Caco-2 (cell line): ENCODE measurements at regions of chr12 and their contacts with region 1.

Region 1: GRCh38 chr12:2057041-2057794 is 4.4 kb downstream of the CACNA1C start:
- DNase-seq: peak; percentile 78 to 84
- H3K4me3 ChIP-seq: no peak overlapping the region
- H3K4me3 Mint-ChIP-seq: no peak overlapping the region
- H3K27ac Mint-ChIP-seq: no peak overlapping the region
- H3K4me1 ChIP-seq: peaks cover 4% of the 10 kb centered on the region; the same call in 1 of the 2 replicates
- H3K4me1 Mint-ChIP-seq: no peaks in the 10 kb centered on the region
- H3K27me3 ChIP-seq: peaks cover 19% of the 10 kb centered on the region
- H3K27me3 Mint-ChIP-seq: peaks cover 49% of the 10 kb centered on the region
- CTCF ChIP-seq: peak; percentile 83 to 87

Region 2: DNA sequence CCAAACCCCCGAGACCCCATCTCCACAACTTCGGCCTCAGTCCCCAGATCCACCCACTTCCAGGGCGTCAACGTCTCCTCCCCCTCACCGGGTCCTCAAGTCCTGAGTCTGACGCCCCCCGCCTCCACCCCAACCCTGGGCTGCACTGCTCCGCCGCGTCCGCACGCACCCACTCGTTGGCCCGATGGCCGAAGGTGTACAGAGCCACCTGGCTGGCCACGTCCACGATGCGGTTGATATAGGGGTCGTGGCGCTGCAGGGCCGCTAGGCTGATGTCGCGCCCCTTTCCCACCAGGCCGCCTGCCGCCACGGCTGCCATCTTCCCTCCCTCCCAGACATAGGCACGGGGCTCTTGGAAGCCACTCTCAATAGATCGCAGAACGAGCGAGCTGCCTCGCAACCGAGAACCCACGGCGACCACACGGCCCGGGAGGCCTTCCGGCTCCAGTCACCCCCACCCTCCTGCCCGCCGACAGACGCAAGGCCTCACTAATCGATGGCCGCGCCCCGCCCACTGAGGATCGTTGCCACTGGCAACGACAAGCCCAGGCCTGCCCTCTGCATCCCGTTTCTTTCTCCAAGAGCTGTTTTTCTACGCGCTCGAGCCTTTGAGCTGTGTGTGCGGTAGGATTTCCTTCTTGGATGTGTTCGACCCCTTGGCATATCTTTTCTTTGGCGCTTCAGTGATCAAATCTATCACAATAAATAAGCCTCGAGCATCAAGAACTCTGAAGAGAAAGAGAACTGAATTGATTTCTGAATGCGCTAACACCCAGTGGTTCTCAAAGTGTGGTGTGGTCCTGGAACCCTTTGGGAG is 52.9 kb before region 1 on chr12 and contains the start of gene DCP1B:
- CTCF ChIA-PET with region 1: no interaction called
- POLR2A ChIA-PET with region 1: no interaction called
- intact Hi-C with region 1: no loop called
- DNase-seq: peak; percentile 98
- H3K4me3 ChIP-seq: peak within 1 kb of the TSS; percentile 81
- H3K4me3 Mint-ChIP-seq: peak within 1 kb of the TSS; percentile 95
- H3K27ac Mint-ChIP-seq: peak within 1 kb of the TSS; percentile 96
- H3K4me1 ChIP-seq: peaks cover 9% of the 10 kb centered on the region
- H3K4me1 Mint-ChIP-seq: peaks cover 7% of the 10 kb centered on the region
- H3K27me3 ChIP-seq: no peaks in the 10 kb centered on the region
- H3K27me3 Mint-ChIP-seq: no peaks in the 10 kb centered on the region
- CTCF ChIP-seq: peak; percentile 13 to 27
- total RNA-seq, gene DCP1B: 8.2 and 8.9 TPM in 2 replicates

Region 3: DNA sequence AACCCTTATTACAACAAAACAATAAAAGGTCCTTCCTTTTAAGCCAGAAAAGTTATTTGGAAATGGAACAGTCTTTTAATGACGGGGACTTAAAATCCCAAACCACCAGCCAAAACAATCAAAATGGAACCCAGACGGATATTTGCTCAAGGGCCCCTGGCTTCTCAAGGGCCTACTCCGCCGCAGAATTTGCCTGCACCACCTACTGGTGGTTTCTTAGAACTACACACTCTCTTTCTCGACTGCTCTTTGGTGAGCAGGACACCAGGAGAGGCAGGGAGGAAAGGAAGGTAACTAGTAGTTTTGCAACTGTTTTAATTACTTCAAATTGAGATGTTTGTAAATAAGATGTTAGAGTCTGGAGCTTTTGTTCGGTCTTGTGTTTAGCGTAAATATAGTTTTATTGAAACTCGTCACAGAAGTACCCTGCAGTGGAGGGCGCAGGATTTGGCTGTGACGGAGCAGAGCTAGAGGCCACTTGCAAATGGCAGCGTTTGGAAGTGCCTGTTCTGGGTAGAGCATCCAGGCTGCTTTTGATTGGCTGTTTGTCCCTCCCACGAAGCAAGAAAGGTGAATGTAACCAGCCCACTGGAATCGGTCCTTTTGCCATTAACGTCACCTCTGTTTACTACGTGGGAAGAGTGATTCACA is 234.1 kb after region 1 on chr12:
- CTCF ChIA-PET with region 1: no interaction called
- POLR2A ChIA-PET with region 1: no interaction called
- intact Hi-C with region 1: loop called (anchors 1 kb)
- DNase-seq: peak; percentile 50 to 70
- H3K4me3 ChIP-seq: no peak overlapping the region
- H3K4me3 Mint-ChIP-seq: no peak overlapping the region
- H3K27ac Mint-ChIP-seq: no peak overlapping the region
- H3K4me1 ChIP-seq: no peaks in the 10 kb centered on the region
- H3K4me1 Mint-ChIP-seq: peaks cover 6% of the 10 kb centered on the region
- H3K27me3 ChIP-seq: peaks cover 5% of the 10 kb centered on the region; the same call in 1 of the 2 replicates
- H3K27me3 Mint-ChIP-seq: peaks cover 38% of the 10 kb centered on the region
- CTCF ChIP-seq: peak; percentile 85 to 91

Region 4: GRCh38 chr12:2924019-2924418 is 866.8 kb after region 1 on chr12:
- CTCF ChIA-PET with region 1: no interaction called
- POLR2A ChIA-PET with region 1: no interaction called
- intact Hi-C with region 1: no loop called
- DNase-seq: no peak
- H3K4me3 ChIP-seq: no peak overlapping the region
- H3K4me3 Mint-ChIP-seq: no peak overlapping the region
- H3K27ac Mint-ChIP-seq: no peak overlapping the region
- H3K4me1 ChIP-seq: no peaks in the 10 kb centered on the region
- H3K4me1 Mint-ChIP-seq: no peaks in the 10 kb centered on the region
- H3K27me3 ChIP-seq: no peaks in the 10 kb centered on the region
- H3K27me3 Mint-ChIP-seq: no peaks in the 10 kb centered on the region
- CTCF ChIP-seq: no peak